SK-MEL-5 (cell line): ENCODE measurements at regions of chr3 and their contacts with region 1.

Region 1: GRCh38 chr3:35965908-35966307 is 326.6 kb downstream of the ARPP21 start:
- DNase-seq: peak; percentile 54

Region 2: GRCh38 chr3:36700537-36701248 is 734.8 kb after region 1 on chr3:
- in situ Hi-C with region 1: loop called (anchors 25 kb)
- DNase-seq: peak; percentile 77